ENCODE measurements at regions of chr3 and their contacts with region 1.

Region 1: DNA sequence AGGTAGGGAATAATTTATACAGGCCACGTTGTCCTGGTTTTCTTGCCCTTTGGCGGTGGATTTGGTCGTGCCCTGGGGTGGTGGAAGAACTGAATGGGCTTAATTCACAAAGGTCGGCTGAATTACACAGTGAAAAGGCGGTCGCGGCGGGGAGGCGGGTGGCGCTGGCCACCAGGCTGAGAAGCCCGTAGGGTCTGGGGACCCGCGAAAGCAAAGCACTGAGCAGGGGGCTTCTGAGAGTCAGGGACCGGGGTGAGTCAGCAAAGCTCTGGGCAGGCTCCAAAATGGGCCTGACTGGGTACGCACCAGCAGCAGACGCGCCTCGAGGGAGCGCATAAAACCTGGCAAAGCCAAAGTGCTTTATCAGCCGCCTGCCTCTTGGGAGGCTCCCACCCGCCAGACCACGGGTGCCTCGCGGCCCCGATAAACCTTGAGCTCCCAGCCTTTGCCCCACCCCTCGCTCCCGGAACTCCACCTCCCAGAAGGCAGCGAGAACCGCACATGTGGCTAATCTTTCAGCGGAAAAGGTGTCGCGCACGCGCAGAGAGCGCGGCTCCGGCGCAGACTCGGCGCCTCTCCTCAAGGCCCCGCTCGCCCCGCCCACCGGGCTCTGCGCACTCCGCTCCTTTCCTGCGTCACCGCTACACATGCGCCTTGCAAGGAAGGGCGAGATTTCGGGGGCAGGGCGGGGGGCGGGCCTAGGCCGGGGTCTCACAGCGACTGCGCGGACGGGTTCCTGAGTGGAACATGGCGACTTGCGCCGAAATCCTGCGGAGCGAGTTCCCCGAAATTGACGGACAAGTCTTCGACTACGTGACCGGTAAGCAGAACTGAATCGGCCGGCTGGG is at the start of gene ABCF3:
- DNase-seq: peak; percentile 100
- ATAC-seq: peak; percentile 94
- H3K4me3 ChIP-seq: peak within 1 kb of the TSS; percentile 70 to 100 (median 97)
- H3K4me3 Mint-ChIP-seq: peak within 1 kb of the TSS; percentile 99
- H3K27ac ChIP-seq: peak within 1 kb of the TSS; percentile 48 to 68
- H3K27ac Mint-ChIP-seq: peak within 1 kb of the TSS; percentile 94
- H3K4me1 ChIP-seq: peaks cover 17 to 21% of the 10 kb centered on the region in 2 donors
- H3K4me1 Mint-ChIP-seq: peaks cover 33% of the 10 kb centered on the region
- H3K27me3 ChIP-seq: no peaks in the 10 kb centered on the region
- H3K27me3 Mint-ChIP-seq: no peaks in the 10 kb centered on the region
- CTCF ChIP-seq: no peak
- total RNA-seq, gene ABCF3: 115 and 131 TPM in 2 replicates

Region 2: GRCh38 chr3:184154885-184155643 is 30.6 kb before region 1 on chr3 and contains the start of gene DVL3:
- CTCF ChIA-PET with region 1: no interaction called
- POLR2A ChIA-PET with region 1: no interaction called
- intact Hi-C with region 1: loop called (anchors 1 kb)
- DNase-seq: peak; percentile 77
- ATAC-seq: peak; percentile 83
- H3K4me3 ChIP-seq: peak within 1 kb of the TSS; percentile 70 to 81 (median 76)
- H3K4me3 Mint-ChIP-seq: peak within 1 kb of the TSS; percentile 95
- H3K27ac ChIP-seq: peak within 1 kb of the TSS; percentile 33 to 74
- H3K27ac Mint-ChIP-seq: peak within 1 kb of the TSS; percentile 87
- H3K4me1 ChIP-seq: peaks cover 13 to 34% of the 10 kb centered on the region in 2 donors
- H3K4me1 Mint-ChIP-seq: peaks cover 31% of the 10 kb centered on the region
- H3K27me3 ChIP-seq: no peaks in the 10 kb centered on the region
- H3K27me3 Mint-ChIP-seq: no peaks in the 10 kb centered on the region
- CTCF ChIP-seq: no peak
- total RNA-seq, gene DVL3: 81.3 and 92.0 TPM in 2 replicates

Region 3: DNA sequence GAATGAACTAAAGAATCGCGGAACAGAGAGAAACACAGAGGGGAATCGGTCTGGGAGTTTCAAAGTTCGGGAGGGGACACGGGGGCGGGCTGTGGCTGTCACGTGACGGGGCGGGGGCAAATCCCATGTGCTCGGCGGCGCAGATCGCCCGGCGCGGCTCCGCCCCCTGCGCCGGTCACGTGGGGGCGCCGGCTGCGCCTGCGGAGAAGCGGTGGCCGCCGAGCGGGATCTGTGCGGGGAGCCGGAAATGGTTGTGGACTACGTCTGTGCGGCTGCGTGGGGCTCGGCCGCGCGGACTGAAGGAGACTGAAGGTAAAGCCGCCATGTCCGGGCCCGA is 128.6 kb after region 1 on chr3 and contains the start of gene EIF4G1:
- CTCF ChIA-PET with region 1: no interaction called
- POLR2A ChIA-PET with region 1: no interaction called
- intact Hi-C with region 1: loop called (anchors 1 kb)
- DNase-seq: peak; percentile 96
- ATAC-seq: peak; percentile 90
- H3K4me3 ChIP-seq: peak within 1 kb of the TSS; percentile 43 to 71 (median 61)
- H3K4me3 Mint-ChIP-seq: peak within 1 kb of the TSS; percentile 90
- H3K27ac ChIP-seq: peak within 1 kb of the TSS; percentile 73 to 89
- H3K27ac Mint-ChIP-seq: peak within 1 kb of the TSS; percentile 88
- H3K4me1 ChIP-seq: peaks cover 13 to 23% of the 10 kb centered on the region in 2 donors
- H3K4me1 Mint-ChIP-seq: peaks cover 31% of the 10 kb centered on the region
- H3K27me3 ChIP-seq: no peaks in the 10 kb centered on the region
- H3K27me3 Mint-ChIP-seq: no peaks in the 10 kb centered on the region
- CTCF ChIP-seq: no peak
- total RNA-seq, gene EIF4G1: 160 TPM in 2 replicates

Measured in B cell (primary cell).